ENCODE measurements at regions of chr21 and their contacts with region 1.

Region 1: DNA sequence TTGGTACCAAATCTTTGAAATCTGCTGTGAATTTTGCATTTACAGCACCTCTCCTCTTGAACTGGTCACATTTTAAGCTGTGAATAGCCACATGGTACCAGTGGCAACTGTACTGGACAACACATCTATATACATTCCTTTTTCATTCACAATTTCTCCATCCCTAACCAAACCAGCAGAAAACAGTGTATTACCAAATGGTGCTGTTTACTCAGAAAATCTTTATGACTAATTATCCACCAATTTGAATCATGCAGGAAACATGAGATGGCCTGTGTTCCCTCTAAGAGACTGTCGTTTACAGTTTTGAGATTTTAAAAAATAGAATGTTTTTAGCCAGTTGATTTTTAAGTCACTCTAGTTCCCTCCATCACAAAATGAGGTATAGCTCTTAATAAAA is 17.6 kb upstream of the CCT8 start:
- DNase-seq: no peak
- ATAC-seq: no peak
- H3K4me3 Mint-ChIP-seq: no peak overlapping the region
- H3K27ac Mint-ChIP-seq: no peak overlapping the region
- H3K4me1 Mint-ChIP-seq: no peaks in the 10 kb centered on the region
- H3K27me3 Mint-ChIP-seq: no peaks in the 10 kb centered on the region

Region 2: DNA sequence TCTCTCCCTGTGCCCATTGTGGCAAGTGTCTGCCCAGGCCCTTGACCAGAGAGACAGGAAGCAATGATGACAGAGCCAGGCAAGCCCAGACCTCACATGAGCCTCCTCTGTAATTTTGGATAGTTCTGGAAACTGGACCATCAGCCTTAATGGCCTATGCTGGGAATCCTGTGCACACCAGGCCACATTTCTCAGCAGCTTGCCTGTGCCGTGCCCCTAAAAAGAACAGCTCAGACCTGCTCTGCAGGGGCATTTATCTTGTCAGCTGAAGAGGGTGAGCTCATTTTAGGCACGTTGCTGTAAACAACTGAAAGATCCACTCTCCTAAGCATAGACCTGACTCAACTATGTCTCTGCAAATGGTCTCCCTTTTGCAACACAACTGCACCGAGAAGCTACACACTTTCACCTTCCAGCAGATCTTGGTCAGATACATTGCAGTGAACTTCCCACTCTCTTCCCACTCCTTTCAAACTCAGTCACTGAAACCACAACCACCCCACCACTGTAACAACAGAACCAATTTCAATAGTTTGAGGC is 154.1 kb after region 1 on chr21:
- CTCF ChIA-PET with region 1: no interaction called
- POLR2A ChIA-PET with region 1: no interaction called
- DNase-seq: no peak
- ATAC-seq: no peak
- H3K4me3 Mint-ChIP-seq: no peak overlapping the region
- H3K27ac Mint-ChIP-seq: no peak overlapping the region
- H3K4me1 Mint-ChIP-seq: peaks cover 4% of the 10 kb centered on the region
- H3K27me3 Mint-ChIP-seq: peaks cover 8% of the 10 kb centered on the region

Region 3: GRCh38 chr21:29349702-29350101 is 258.7 kb after region 1 on chr21:
- CTCF ChIA-PET with region 1: interaction called, 20 read pairs
- POLR2A ChIA-PET with region 1: no interaction called
- DNase-seq: no peak
- ATAC-seq: no peak
- H3K4me3 Mint-ChIP-seq: no peak overlapping the region
- H3K27ac Mint-ChIP-seq: no peak overlapping the region
- H3K4me1 Mint-ChIP-seq: peaks cover 16% of the 10 kb centered on the region
- H3K27me3 Mint-ChIP-seq: no peaks in the 10 kb centered on the region

Region 4: DNA sequence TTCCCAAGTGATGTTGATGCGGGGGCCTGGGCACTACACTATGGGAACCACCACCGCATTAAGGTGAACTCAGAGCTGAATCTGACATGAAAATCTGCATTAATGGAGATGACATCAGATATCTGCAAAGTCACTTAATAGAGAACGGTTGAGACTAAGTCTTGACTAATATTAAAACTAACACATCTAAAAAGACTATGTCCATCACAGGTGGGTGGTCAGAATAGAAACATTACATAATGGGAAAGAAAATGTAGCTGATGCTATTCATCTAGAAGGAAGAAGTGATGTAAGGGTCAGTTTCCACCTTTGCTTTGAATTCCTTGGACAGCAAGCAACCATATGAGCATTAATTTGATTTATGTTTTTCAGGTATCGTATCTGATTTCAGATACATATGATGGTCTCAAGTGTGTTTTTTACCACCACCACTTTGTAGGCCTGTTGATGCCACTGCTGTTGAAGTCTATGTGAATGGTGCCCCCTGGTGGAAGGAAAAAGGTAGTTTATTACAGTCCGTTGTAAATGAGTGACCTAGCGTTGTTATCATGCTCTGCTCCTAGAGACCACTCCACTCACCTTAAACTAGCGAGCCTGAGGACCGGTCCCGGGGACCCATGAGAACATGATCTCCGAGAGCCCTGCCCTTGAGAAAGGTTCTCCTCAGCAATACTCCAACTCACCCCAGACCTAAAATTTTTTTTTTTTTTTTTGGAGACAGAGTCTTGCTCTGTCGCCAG is 281.2 kb after region 1 on chr21:
- CTCF ChIA-PET with region 1: interaction called, 28 read pairs
- POLR2A ChIA-PET with region 1: no interaction called
- DNase-seq: peak; percentile 72
- ATAC-seq: peak; percentile 83
- H3K4me3 Mint-ChIP-seq: no peak overlapping the region
- H3K27ac Mint-ChIP-seq: no peak overlapping the region
- H3K4me1 Mint-ChIP-seq: peaks cover 9% of the 10 kb centered on the region
- H3K27me3 Mint-ChIP-seq: no peaks in the 10 kb centered on the region